Natural killer cell (primary cell): ENCODE measurements at regions of chr6 and their contacts with region 1.

Region 1: GRCh38 chr6:14717307-14717706 is 528.6 kb upstream of the JARID2 start:
- DNase-seq: peak; percentile 33 to 65
- ATAC-seq: peak; percentile 98 to 100 (median 99)
- H3K4me3 ChIP-seq: no peak overlapping the region
- H3K4me3 Mint-ChIP-seq: peak overlapping the region; percentile 89
- H3K27ac ChIP-seq: peak overlapping the region; percentile 16
- H3K27ac Mint-ChIP-seq: peak overlapping the region; percentile 75 to 82
- H3K4me1 ChIP-seq: peaks cover 43% of the 10 kb centered on the region
- H3K4me1 Mint-ChIP-seq: peaks cover 29 to 52% of the 10 kb centered on the region in 2 donors
- H3K27me3 ChIP-seq: no peaks in the 10 kb centered on the region
- H3K27me3 Mint-ChIP-seq: no peaks in the 10 kb centered on the region
- CTCF ChIP-seq: no peak

Region 2: GRCh38 chr6:14159090-14159489 is 558.2 kb before region 1 on chr6:
- intact Hi-C with region 1: no loop called
- DNase-seq: no peak
- ATAC-seq: no peak
- H3K4me3 ChIP-seq: no peak overlapping the region
- H3K4me3 Mint-ChIP-seq: no peak overlapping the region
- H3K27ac ChIP-seq: no peak overlapping the region
- H3K27ac Mint-ChIP-seq: no peak overlapping the region
- H3K4me1 ChIP-seq: no peaks in the 10 kb centered on the region
- H3K4me1 Mint-ChIP-seq: no peaks in the 10 kb centered on the region
- H3K27me3 ChIP-seq: no peaks in the 10 kb centered on the region
- H3K27me3 Mint-ChIP-seq: peaks cover 6 to 7% of the 10 kb centered on the region in 2 donors
- CTCF ChIP-seq: no peak

Region 3: GRCh38 chr6:14734416-14735340 is 17.4 kb after region 1 on chr6:
- intact Hi-C with region 1: loop called (anchors 1 kb)
- DNase-seq: peak in 1 of 2 donors; percentile 71
- ATAC-seq: peak; percentile 79 to 91 (median 83)
- H3K4me3 ChIP-seq: no peak overlapping the region
- H3K4me3 Mint-ChIP-seq: peak overlapping the region; percentile 80
- H3K27ac ChIP-seq: peak overlapping the region; percentile 64
- H3K27ac Mint-ChIP-seq: peak overlapping the region; percentile 79 to 91
- H3K4me1 ChIP-seq: peaks cover 46% of the 10 kb centered on the region
- H3K4me1 Mint-ChIP-seq: peaks cover 70 to 74% of the 10 kb centered on the region in 2 donors
- H3K27me3 ChIP-seq: no peaks in the 10 kb centered on the region
- H3K27me3 Mint-ChIP-seq: no peaks in the 10 kb centered on the region
- CTCF ChIP-seq: no peak

Region 4: DNA sequence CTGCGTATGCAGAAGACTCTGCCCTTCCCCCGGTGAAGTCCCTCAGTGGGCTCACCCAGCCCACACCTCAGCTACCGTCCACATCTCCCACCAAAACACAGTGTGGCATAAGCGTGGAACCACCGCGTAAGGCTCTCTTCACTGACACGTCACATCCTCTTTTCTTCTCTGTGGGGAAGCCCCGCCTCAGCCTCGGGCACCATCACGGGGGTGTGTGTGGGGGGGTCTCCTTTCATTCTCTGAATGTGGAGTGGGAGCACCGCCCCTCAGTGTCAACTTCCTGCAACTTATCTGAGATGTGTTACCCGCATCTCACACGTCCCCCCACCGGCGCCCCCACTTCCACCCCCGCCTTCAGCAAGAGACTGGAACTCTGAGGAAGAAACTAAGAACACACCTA is 140.2 kb after region 1 on chr6:
- intact Hi-C with region 1: no loop called
- DNase-seq: peak; percentile 88 to 92
- ATAC-seq: peak; percentile 94 to 98 (median 95)
- H3K4me3 ChIP-seq: peak overlapping the region; percentile 4
- H3K4me3 Mint-ChIP-seq: peak overlapping the region; percentile 94
- H3K27ac ChIP-seq: peak overlapping the region; percentile 78
- H3K27ac Mint-ChIP-seq: peak overlapping the region; percentile 100
- H3K4me1 ChIP-seq: peaks cover 36% of the 10 kb centered on the region
- H3K4me1 Mint-ChIP-seq: peaks cover 52 to 65% of the 10 kb centered on the region in 2 donors
- H3K27me3 ChIP-seq: no peaks in the 10 kb centered on the region
- H3K27me3 Mint-ChIP-seq: no peaks in the 10 kb centered on the region
- CTCF ChIP-seq: no peak